CD8-positive, alpha-beta T cell (primary cell): ENCODE measurements at regions of chr2 and their contacts with region 1.

Region 1: GRCh38 chr2:96856776-96857673 is 791 bp downstream of the ANKRD39 start:
- DNase-seq: peak in 6 of 9 experiments; percentile 37 to 72 (median 44)
- ATAC-seq: no peak
- H3K4me3 ChIP-seq: peak overlapping the region; percentile 83 to 89
- H3K4me3 Mint-ChIP-seq: peak overlapping the region; percentile 87
- H3K27ac ChIP-seq: peak overlapping the region; percentile 65 to 81
- H3K27ac Mint-ChIP-seq: peak overlapping the region; percentile 85
- H3K4me1 ChIP-seq: peaks cover 32% of the 10 kb centered on the region
- H3K4me1 Mint-ChIP-seq: peaks cover 40% of the 10 kb centered on the region
- H3K27me3 ChIP-seq: no peaks in the 10 kb centered on the region
- H3K27me3 Mint-ChIP-seq: no peaks in the 10 kb centered on the region
- CTCF ChIP-seq: no peak

Region 2: GRCh38 chr2:96463119-96463518 is 393.9 kb before region 1 on chr2:
- CTCF ChIA-PET with region 1: no interaction called
- POLR2A ChIA-PET with region 1: no interaction called
- intact Hi-C with region 1: no loop called
- DNase-seq: no peak
- ATAC-seq: no peak
- H3K4me3 ChIP-seq: no peak overlapping the region
- H3K4me3 Mint-ChIP-seq: no peak overlapping the region
- H3K27ac ChIP-seq: no peak overlapping the region
- H3K27ac Mint-ChIP-seq: no peak overlapping the region
- H3K4me1 ChIP-seq: no peaks in the 10 kb centered on the region
- H3K4me1 Mint-ChIP-seq: no peaks in the 10 kb centered on the region
- H3K27me3 ChIP-seq: no peaks in the 10 kb centered on the region
- H3K27me3 Mint-ChIP-seq: no peaks in the 10 kb centered on the region
- CTCF ChIP-seq: no peak

Region 3: DNA sequence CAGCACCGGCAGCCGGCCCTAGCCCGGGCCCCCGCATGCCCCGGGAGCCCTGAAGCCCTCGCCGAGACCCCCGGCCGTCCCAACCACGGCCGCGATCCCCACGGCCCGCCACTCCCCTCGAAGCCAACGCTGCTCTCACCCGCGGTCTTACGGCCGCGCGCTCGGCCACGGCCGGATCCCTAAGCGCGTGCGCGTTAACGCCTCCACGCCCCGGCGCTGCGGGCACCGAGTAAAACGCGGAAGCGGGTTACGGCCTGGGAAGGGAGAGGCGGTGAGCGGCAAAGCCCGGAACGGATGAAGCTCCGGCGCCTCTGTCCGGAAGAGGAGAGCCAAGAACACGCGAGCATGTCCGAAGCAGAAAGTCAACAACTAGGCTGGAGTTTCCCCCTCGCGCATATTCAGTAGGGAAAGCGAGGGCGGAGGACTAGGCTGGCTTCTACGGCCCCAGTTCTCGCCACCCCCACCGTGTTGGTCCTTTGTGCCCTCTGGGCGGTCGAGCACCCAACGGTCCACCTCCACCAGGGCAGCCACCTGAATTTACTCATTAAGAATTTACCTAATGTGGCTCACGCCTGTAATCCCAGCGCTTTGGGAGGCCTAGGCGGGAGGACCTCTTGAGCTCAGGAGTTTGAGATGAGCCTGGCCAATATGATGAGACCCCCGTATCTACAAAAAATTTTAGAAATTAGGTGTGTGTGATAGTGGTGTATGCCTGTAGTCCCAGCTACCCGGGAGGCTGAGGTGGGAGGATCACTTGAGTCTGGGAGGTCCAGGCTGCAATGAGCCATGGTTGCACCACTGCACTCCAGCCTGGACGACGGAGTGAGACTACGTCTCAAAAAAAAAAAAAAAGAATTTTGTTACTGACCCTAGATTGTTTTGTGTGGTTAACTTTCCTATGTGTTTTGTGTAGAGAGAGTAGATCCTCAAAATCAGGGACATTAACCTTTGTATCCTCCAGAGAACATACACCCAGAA is 218.6 kb before region 1 on chr2 and contains the start of gene KANSL3:
- CTCF ChIA-PET with region 1: interaction called, 3 read pairs
- POLR2A ChIA-PET with region 1: interaction called, 4 read pairs
- intact Hi-C with region 1: loop called (anchors 1 kb)
- DNase-seq: peak; percentile 79 to 95 (median 88)
- ATAC-seq: peak; percentile 85
- H3K4me3 ChIP-seq: peak within 1 kb of the TSS; percentile 71 to 95
- H3K4me3 Mint-ChIP-seq: peak within 1 kb of the TSS; percentile 93
- H3K27ac ChIP-seq: peak within 1 kb of the TSS; percentile 83 to 91
- H3K27ac Mint-ChIP-seq: peak within 1 kb of the TSS; percentile 96
- H3K4me1 ChIP-seq: peaks cover 24% of the 10 kb centered on the region
- H3K4me1 Mint-ChIP-seq: peaks cover 32% of the 10 kb centered on the region
- H3K27me3 ChIP-seq: no peaks in the 10 kb centered on the region
- H3K27me3 Mint-ChIP-seq: peaks cover 2% of the 10 kb centered on the region
- CTCF ChIP-seq: no peak
- total RNA-seq, gene KANSL3: 58.8 to 60.4 TPM

Region 4: GRCh38 chr2:96656540-96656939 is 200.5 kb before region 1 on chr2:
- CTCF ChIA-PET with region 1: no interaction called
- POLR2A ChIA-PET with region 1: no interaction called
- intact Hi-C with region 1: no loop called
- DNase-seq: no peak
- ATAC-seq: no peak
- H3K4me3 ChIP-seq: no peak overlapping the region
- H3K4me3 Mint-ChIP-seq: no peak overlapping the region
- H3K27ac ChIP-seq: no peak overlapping the region
- H3K27ac Mint-ChIP-seq: no peak overlapping the region
- H3K4me1 ChIP-seq: no peaks in the 10 kb centered on the region
- H3K4me1 Mint-ChIP-seq: no peaks in the 10 kb centered on the region
- H3K27me3 ChIP-seq: no peaks in the 10 kb centered on the region
- H3K27me3 Mint-ChIP-seq: no peaks in the 10 kb centered on the region
- CTCF ChIP-seq: no peak

Region 5: DNA sequence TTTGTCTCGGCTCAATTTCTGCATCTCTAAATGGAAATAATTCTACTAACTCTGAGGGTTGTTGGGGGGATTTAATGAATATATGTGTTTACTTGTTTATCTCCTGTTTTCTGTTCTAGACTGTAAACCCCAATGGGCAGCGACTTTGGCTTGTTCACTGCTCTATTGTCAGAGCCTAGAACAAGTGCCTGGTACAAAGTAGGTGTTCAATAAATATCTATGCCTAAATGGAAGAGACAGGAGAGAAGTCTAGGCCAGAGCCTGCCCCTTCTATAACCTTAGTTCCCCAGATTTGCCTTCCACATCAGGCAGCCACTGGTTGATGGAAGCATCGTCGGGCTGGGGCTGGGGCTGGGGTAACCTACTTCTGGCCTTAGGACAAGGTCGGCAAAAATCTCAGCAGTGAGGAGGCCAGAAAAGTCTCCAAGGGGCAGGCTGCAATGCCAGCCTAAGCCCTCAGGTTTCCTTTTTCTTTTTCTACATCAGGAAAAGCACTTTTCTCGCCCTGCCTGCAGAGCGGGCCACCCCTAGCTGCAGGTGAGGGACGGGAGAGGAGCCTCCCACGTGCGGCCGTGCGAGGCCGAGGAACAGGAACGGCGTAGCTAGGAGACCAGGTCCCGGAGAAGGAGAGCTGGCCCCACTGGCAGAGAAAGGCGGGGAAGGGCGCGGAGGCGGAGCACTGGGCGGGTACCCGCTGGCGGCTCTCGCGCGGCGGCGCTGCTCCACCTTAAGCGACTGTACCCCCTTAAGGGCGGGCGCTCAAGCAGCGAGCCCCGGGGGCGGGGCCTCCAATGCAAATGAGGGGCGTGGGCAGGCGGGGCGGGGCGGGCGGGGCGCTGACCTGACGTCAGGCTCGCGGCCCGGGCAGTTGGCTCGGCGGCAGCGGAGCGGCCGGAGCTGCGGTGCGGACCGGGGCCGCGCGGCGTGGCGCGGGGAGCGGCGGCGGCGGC is 96.7 kb before region 1 on chr2 and contains the start of gene CNNM4:
- CTCF ChIA-PET with region 1: interaction called, 3 read pairs
- POLR2A ChIA-PET with region 1: interaction called, 4 read pairs
- intact Hi-C with region 1: loop called (anchors 2 to 5 kb)
- DNase-seq: peak; percentile 79 to 95 (median 92)
- ATAC-seq: peak; percentile 94
- H3K4me3 ChIP-seq: peak within 1 kb of the TSS; percentile 67 to 95
- H3K4me3 Mint-ChIP-seq: peak within 1 kb of the TSS; percentile 87
- H3K27ac ChIP-seq: peak within 1 kb of the TSS; percentile 60 to 73
- H3K27ac Mint-ChIP-seq: peak within 1 kb of the TSS; percentile 92
- H3K4me1 ChIP-seq: peaks cover 50% of the 10 kb centered on the region
- H3K4me1 Mint-ChIP-seq: peaks cover 54% of the 10 kb centered on the region
- H3K27me3 ChIP-seq: no peaks in the 10 kb centered on the region
- H3K27me3 Mint-ChIP-seq: no peaks in the 10 kb centered on the region
- CTCF ChIP-seq: no peak
- total RNA-seq, gene CNNM4: 6.7 to 8.3 TPM

Region 6: DNA sequence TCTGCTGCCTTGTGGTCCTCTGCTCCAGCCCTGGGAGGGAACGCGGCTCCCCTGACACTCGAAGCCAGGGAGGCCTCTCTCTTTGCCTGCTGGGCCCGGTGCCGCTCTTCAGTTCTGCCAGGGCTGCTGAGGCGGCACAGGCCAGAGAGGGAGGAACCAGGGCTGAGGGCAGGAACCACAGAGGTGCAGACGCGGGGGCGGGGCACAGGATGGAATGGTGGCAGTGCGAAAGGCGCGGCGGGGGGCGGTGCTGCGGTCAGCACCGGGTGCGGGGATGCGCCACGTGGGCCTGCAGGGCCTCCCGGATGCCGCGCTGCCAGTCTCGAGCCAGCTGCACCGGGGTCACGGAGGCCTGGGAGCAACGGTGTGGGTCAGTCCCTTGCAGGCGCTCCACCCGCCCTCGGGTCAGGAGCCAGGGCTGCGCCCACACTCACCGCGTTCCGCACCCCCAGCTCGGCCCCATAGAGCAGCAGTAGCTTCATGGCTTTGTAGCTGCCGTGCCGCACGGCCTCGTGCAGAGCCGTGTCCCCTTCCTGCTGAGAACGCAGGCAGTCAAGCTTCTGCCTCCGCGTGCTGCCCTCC is 17.6 kb before region 1 on chr2:
- CTCF ChIA-PET with region 1: interaction called, 22 read pairs
- POLR2A ChIA-PET with region 1: interaction called, 19 read pairs
- intact Hi-C with region 1: loop called in 1 of 2 experiments (anchors 2 kb)
- DNase-seq: peak; percentile 65 to 92 (median 86)
- ATAC-seq: peak; percentile 97
- H3K4me3 ChIP-seq: peak overlapping the region; percentile 35 to 40
- H3K4me3 Mint-ChIP-seq: peak overlapping the region; percentile 70
- H3K27ac ChIP-seq: peak overlapping the region in 1 of 2 experiments; percentile 42
- H3K27ac Mint-ChIP-seq: peak overlapping the region; percentile 62
- H3K4me1 ChIP-seq: peaks cover 26% of the 10 kb centered on the region
- H3K4me1 Mint-ChIP-seq: peaks cover 18% of the 10 kb centered on the region
- H3K27me3 ChIP-seq: no peaks in the 10 kb centered on the region
- H3K27me3 Mint-ChIP-seq: no peaks in the 10 kb centered on the region
- CTCF ChIP-seq: no peak

Region 7: DNA sequence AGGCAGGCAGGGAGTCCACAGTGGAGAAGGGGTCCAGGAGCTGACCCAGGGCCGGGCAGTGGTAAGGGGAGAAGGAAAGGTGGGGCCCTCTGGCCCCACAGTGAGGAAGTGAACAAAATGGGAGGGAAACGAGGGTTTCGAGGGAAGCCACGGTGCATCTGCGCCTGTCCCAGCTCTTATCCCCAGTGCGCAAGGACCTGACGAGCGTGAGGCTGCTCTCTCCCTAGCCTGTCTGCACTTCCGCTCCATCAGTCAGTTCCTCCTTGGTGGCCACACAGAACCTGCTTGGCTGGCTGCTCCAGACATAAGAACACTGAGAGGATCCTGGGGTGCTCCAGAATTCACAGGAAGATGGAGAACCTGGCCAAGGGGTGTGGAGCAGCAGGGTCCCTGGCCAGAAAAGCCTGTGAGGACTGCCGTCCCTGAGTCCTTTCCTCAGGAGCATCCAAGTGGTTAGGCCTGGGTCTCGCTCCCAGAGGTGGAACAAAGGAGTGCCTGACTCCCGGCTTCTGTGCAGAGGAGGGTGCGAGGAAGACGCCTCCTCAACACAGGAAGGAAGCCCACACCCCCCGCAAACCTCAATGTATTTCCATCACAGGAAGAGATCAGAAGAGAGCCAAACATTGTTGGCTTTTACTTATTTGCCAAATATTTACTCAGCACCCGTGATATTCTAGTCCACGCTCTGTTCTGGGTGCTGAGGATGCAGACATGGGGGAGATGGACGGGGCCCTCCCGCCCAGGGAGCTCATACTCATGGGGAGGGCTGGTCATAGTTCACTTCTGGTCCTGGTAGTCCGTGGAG is 56.6 kb after region 1 on chr2:
- CTCF ChIA-PET with region 1: interaction called, 11 read pairs
- POLR2A ChIA-PET with region 1: interaction called, 6 read pairs
- intact Hi-C with region 1: no loop called
- DNase-seq: peak in 8 of 9 experiments; percentile 46 to 81 (median 65)
- ATAC-seq: peak; percentile 78
- H3K4me3 ChIP-seq: peak overlapping the region; percentile 40 to 42
- H3K4me3 Mint-ChIP-seq: peak overlapping the region; percentile 82
- H3K27ac ChIP-seq: peak overlapping the region; percentile 32 to 75
- H3K27ac Mint-ChIP-seq: peak overlapping the region; percentile 94
- H3K4me1 ChIP-seq: peaks cover 53% of the 10 kb centered on the region
- H3K4me1 Mint-ChIP-seq: peaks cover 75% of the 10 kb centered on the region
- H3K27me3 ChIP-seq: no peaks in the 10 kb centered on the region
- H3K27me3 Mint-ChIP-seq: no peaks in the 10 kb centered on the region
- CTCF ChIP-seq: no peak

Region 8: DNA sequence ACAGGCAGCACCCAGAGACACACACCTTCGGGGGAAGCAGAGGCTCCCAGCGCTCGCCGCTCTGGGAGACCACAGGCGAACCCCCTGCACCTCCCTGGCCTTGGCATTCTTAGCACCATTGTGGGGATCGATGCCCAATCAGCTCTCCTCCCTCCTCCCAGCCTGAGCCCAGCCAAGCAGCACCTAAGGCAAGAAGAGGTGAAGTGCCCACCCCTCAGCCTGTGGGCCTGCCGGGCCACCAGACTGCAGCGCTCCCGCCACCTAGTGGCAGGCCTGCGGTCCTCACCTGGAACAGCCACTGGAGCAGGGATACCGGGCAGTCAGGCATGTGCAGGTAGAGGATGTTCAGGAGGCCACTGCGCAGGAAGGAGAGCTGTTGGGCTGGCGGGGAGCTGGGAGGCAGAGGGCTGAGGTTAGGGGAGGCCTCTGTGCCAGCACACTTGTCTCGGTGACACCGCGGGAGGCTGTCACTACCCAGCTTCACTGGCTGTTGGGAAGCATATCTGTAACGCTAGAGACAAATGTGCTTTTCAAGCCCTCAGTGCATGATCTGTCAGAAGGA is 94.1 kb after region 1 on chr2:
- CTCF ChIA-PET with region 1: interaction called, 651 read pairs
- POLR2A ChIA-PET with region 1: interaction called, 40 read pairs
- intact Hi-C with region 1: loop called (anchors 1 kb)
- DNase-seq: peak; percentile 55 to 89 (median 78)
- ATAC-seq: peak; percentile 98
- H3K4me3 ChIP-seq: no peak overlapping the region
- H3K4me3 Mint-ChIP-seq: no peak overlapping the region
- H3K27ac ChIP-seq: no peak overlapping the region
- H3K27ac Mint-ChIP-seq: no peak overlapping the region
- H3K4me1 ChIP-seq: peaks cover 23% of the 10 kb centered on the region
- H3K4me1 Mint-ChIP-seq: peaks cover 21% of the 10 kb centered on the region
- H3K27me3 ChIP-seq: no peaks in the 10 kb centered on the region
- H3K27me3 Mint-ChIP-seq: no peaks in the 10 kb centered on the region
- CTCF ChIP-seq: peak; percentile 90

Region 9: GRCh38 chr2:97095661-97096060 is 238.6 kb after region 1 on chr2:
- CTCF ChIA-PET with region 1: no interaction called
- POLR2A ChIA-PET with region 1: no interaction called
- intact Hi-C with region 1: loop called in 1 of 2 experiments (anchors 5 kb)
- DNase-seq: no peak
- ATAC-seq: no peak
- H3K4me3 ChIP-seq: peak overlapping the region in 1 of 2 experiments; percentile 35
- H3K4me3 Mint-ChIP-seq: peak overlapping the region; percentile 79
- H3K27ac ChIP-seq: no peak overlapping the region
- H3K27ac Mint-ChIP-seq: peak overlapping the region; percentile 43
- H3K4me1 ChIP-seq: peaks cover 8% of the 10 kb centered on the region
- H3K4me1 Mint-ChIP-seq: peaks cover 16% of the 10 kb centered on the region
- H3K27me3 ChIP-seq: peaks cover 0 to 2% of the 10 kb centered on the region in 2 experiments
- H3K27me3 Mint-ChIP-seq: peaks cover 6% of the 10 kb centered on the region
- CTCF ChIP-seq: no peak